ENCODE measurements at regions of chr22 and their contacts with region 1.

Region 1: DNA sequence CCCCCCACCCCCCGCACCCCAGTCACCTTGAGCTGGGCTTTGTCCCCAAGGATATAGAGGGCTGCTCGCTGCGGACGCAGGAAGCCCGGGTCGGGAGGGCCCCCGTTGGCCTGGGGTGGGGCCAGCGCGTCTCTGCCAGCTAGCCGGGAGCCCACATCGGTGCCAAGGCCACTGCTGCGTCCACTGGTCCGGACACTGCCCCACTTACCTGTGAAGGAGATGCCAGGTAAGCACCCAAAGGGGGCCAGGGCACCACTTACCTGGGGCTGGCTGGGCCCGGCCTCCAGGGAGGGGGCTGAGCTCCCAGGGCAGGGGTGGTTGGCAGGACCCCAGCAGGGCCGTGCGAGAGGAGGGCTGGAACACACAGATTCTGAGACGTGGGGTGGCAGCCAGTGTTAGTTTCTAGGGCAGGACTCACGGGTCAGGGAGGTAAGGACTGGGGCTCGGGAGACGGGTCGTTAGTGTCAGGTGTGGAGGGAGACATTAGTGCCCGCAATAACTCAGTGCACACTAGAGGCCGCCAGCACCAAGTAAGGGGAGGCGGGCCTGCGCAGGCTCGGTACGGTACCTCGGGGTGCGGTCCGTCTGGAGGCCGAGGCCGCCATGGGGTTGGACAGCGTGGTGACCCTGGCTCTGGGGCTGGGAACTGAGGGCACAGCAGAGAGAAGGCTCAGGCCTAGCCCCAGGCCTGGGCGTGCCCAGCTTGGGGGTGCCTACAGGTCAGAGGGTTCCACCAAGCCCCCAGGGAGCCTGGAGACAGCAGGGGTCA is 18.2 kb downstream of the SBF1 start:
- DNase-seq: no peak
- ATAC-seq: peak in 1 of 2 donors; percentile 47
- H3K4me3 Mint-ChIP-seq: peak overlapping the region in 1 of 10 donors; percentile 48
- H3K27ac Mint-ChIP-seq: peak overlapping the region in 4 of 10 donors; percentile 41 to 83 (median 45)
- H3K4me1 Mint-ChIP-seq: peaks cover 6 to 15% (median 9%) of the 10 kb centered on the region in 4 donors
- H3K27me3 Mint-ChIP-seq: no peaks in the 10 kb centered on the region

Region 2: GRCh38 chr22:50399751-50400331 is 56.8 kb before region 1 on chr22:
- POLR2A ChIA-PET with region 1: no interaction called
- DNase-seq: peak in 3 of 10 donors; percentile 4 to 14 (median 12)
- ATAC-seq: peak; percentile 33 to 44
- H3K4me3 Mint-ChIP-seq: peak overlapping the region in 3 of 10 donors; percentile 6 to 41 (median 24)
- H3K27ac Mint-ChIP-seq: peak overlapping the region; percentile 68 to 90 (median 84)
- H3K4me1 Mint-ChIP-seq: peaks cover 21 to 50% (median 42%) of the 10 kb centered on the region in 4 donors
- H3K27me3 Mint-ChIP-seq: no peaks in the 10 kb centered on the region

Region 3: GRCh38 chr22:50444663-50445062 is 12.0 kb before region 1 on chr22:
- POLR2A ChIA-PET with region 1: interaction called, 14 read pairs
- DNase-seq: peak in 1 of 10 donors; percentile 35
- ATAC-seq: peak in 1 of 2 donors; percentile 15
- H3K4me3 Mint-ChIP-seq: peak overlapping the region in 8 of 10 donors; percentile 53 to 76 (median 72)
- H3K27ac Mint-ChIP-seq: peak overlapping the region; percentile 75 to 97 (median 92)
- H3K4me1 Mint-ChIP-seq: peaks cover 23 to 57% (median 40%) of the 10 kb centered on the region in 4 donors
- H3K27me3 Mint-ChIP-seq: no peaks in the 10 kb centered on the region

Measured in naive thymus-derived CD8-positive, alpha-beta T cell (primary cell).